ENCODE measurements at regions of chr7 and their contacts with region 1.

Region 1: GRCh38 chr7:31373337-31374289 is 33.1 kb upstream of the NEUROD6 start:
- DNase-seq: peak; percentile 76
- ATAC-seq: peak; percentile 94
- H3K4me3 ChIP-seq: no peak overlapping the region
- H3K27ac ChIP-seq: no peak overlapping the region
- H3K4me1 ChIP-seq: no peaks in the 10 kb centered on the region
- H3K27me3 ChIP-seq: peaks cover 46% of the 10 kb centered on the region
- CTCF ChIP-seq: peak; percentile 86

Region 2: GRCh38 chr7:31192986-31193385 is 180.6 kb before region 1 on chr7:
- CTCF ChIA-PET with region 1: no interaction called
- POLR2A ChIA-PET with region 1: no interaction called
- intact Hi-C with region 1: loop called (anchors 5 kb)
- DNase-seq: peak; percentile 73
- ATAC-seq: peak; percentile 100
- H3K4me3 ChIP-seq: no peak overlapping the region
- H3K27ac ChIP-seq: no peak overlapping the region
- H3K4me1 ChIP-seq: no peaks in the 10 kb centered on the region
- H3K27me3 ChIP-seq: peaks cover 53% of the 10 kb centered on the region
- CTCF ChIP-seq: peak; percentile 76

Region 3: DNA sequence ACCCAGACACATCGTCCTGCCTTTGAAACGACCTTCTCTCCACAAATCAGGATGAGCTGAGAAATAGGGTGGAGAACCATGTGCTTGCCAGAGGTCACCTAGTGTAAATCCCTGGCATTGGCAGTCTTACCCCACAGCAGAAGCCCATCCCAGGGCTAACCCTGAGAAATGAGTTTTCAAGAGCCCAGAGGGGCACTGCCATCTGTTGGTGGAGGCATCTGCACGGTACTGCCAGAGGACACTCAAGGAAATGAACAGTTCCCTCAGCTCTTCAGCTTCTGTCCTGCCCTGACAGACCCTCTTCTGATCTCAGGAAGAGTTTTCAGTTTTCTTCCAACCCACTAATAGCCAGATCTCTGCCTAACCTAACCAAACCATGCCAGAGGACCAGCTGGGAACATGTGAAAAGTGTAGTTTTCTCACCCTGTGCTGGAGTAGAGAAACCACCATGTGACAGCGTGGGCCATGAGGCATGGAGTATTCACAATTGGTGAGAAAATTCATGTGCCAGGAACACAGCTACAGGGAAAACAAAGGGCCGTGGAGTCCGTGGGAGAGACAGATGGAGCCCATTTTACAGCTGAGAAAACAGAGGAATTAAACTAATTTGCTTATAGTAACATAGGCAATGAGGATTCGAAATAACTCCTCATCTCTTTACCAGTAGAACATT is 102.6 kb after region 1 on chr7:
- CTCF ChIA-PET with region 1: no interaction called
- POLR2A ChIA-PET with region 1: no interaction called
- intact Hi-C with region 1: loop called (anchors 1 kb)
- DNase-seq: peak; percentile 33
- ATAC-seq: peak; percentile 81
- H3K4me3 ChIP-seq: no peak overlapping the region
- H3K27ac ChIP-seq: no peak overlapping the region
- H3K4me1 ChIP-seq: no peaks in the 10 kb centered on the region
- H3K27me3 ChIP-seq: peaks cover 77% of the 10 kb centered on the region
- CTCF ChIP-seq: peak; percentile 51

Region 4: GRCh38 chr7:31633894-31634494 is 260.4 kb after region 1 on chr7:
- CTCF ChIA-PET with region 1: no interaction called
- POLR2A ChIA-PET with region 1: no interaction called
- intact Hi-C with region 1: loop called (anchors 1 kb)
- DNase-seq: peak; percentile 80
- ATAC-seq: peak; percentile 90
- H3K4me3 ChIP-seq: no peak overlapping the region
- H3K27ac ChIP-seq: no peak overlapping the region
- H3K4me1 ChIP-seq: no peaks in the 10 kb centered on the region
- H3K27me3 ChIP-seq: peaks cover 46% of the 10 kb centered on the region
- CTCF ChIP-seq: peak; percentile 76

Measured in PC-3 (cell line).